Caco-2 (cell line): ENCODE measurements at regions of chr3 and their contacts with region 1.

Region 1: GRCh38 chr3:86774082-86774691 is 216.8 kb downstream of the VGLL3 start:
- DNase-seq: peak in 1 of 2 experiments; percentile 7
- H3K4me3 ChIP-seq: no peak overlapping the region
- H3K4me3 Mint-ChIP-seq: no peak overlapping the region
- H3K27ac Mint-ChIP-seq: no peak overlapping the region
- H3K4me1 ChIP-seq: no peaks in the 10 kb centered on the region
- H3K4me1 Mint-ChIP-seq: peaks cover 4% of the 10 kb centered on the region
- H3K27me3 ChIP-seq: no peaks in the 10 kb centered on the region; the same call in 1 of the 2 replicates
- H3K27me3 Mint-ChIP-seq: no peaks in the 10 kb centered on the region
- CTCF ChIP-seq: peak; percentile 35 to 56

Region 2: DNA sequence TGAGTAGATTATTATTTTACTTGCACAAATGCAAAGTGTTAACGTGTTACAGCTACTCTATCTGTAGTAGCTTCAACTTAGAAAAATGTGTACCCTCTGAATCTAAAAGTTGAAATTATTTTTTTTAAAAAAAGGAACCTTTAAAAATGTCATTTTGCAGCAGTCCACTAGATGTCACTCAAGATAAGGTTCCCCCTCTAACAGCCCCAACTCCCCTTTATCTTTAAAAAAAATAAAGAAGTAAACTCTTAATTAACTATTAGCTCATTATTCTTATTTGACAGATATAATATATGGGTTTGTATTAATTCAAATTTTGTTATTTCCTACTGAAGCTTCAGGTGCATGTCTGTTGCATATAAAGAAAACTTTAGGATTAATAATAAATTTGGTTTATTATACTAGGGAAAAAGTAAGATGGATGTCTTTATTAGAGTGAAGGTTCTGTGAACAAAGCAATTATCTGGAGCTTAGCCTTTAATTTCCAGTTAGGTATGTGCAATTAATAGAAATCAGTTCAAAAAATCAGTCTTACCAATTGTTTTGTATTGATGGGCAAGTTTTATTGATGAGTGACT is 71.7 kb before region 1 on chr3:
- CTCF ChIA-PET with region 1: no interaction called
- POLR2A ChIA-PET with region 1: no interaction called
- intact Hi-C with region 1: loop called (anchors 5 kb)
- DNase-seq: no peak
- H3K4me3 ChIP-seq: no peak overlapping the region
- H3K4me3 Mint-ChIP-seq: no peak overlapping the region
- H3K27ac Mint-ChIP-seq: no peak overlapping the region
- H3K4me1 ChIP-seq: peaks cover 3% of the 10 kb centered on the region
- H3K4me1 Mint-ChIP-seq: peaks cover 13% of the 10 kb centered on the region
- H3K27me3 ChIP-seq: no peaks in the 10 kb centered on the region
- H3K27me3 Mint-ChIP-seq: no peaks in the 10 kb centered on the region
- CTCF ChIP-seq: peak; percentile 50 to 53

Region 3: GRCh38 chr3:87006844-87007439 is 232.8 kb after region 1 on chr3:
- CTCF ChIA-PET with region 1: no interaction called
- POLR2A ChIA-PET with region 1: no interaction called
- intact Hi-C with region 1: loop called (anchors 10 kb)
- DNase-seq: no peak
- H3K4me3 ChIP-seq: no peak overlapping the region
- H3K4me3 Mint-ChIP-seq: no peak overlapping the region
- H3K27ac Mint-ChIP-seq: no peak overlapping the region
- H3K4me1 ChIP-seq: no peaks in the 10 kb centered on the region
- H3K4me1 Mint-ChIP-seq: no peaks in the 10 kb centered on the region
- H3K27me3 ChIP-seq: no peaks in the 10 kb centered on the region
- H3K27me3 Mint-ChIP-seq: peaks cover 6% of the 10 kb centered on the region
- CTCF ChIP-seq: peak; percentile 18 to 47

Region 4: DNA sequence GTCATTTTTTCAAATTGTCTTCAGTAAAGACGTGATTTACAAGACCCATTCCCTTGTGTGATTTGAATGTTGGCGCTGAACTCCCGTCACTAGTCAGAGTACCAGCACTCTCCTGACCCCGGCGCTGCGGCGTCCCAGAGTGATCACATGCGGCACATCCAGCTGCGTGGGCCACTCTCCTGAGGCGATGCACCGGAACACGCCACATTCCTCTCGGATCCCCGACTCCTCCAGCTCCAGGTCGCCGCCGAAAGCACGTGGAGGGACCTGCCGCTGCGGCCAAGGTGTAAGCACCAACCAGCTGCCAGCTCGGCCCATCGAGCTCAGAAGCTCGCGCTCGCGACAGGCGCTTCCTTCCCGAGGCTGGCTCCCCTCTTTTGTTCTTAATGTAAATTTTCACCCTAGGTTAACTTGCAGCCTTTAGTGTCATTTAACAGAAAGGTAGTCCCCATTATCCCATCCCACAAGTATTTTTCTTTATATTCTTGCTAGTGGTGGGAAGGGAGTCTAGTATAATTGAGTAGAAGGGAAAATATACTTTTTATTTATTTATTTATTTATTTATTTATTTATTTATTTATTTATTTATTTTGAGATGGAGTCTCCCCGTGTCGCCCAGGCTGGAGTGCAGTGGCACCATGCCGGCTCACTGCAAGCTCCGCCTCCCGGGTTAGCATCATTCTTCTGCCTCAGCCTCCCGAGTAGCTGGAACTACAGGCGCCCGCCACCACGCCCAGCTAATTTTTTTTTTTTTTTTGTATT is 278.5 kb after region 1 on chr3:
- CTCF ChIA-PET with region 1: no interaction called
- POLR2A ChIA-PET with region 1: no interaction called
- intact Hi-C with region 1: no loop called
- DNase-seq: no peak
- H3K4me3 ChIP-seq: no peak overlapping the region
- H3K4me3 Mint-ChIP-seq: no peak overlapping the region
- H3K27ac Mint-ChIP-seq: no peak overlapping the region
- H3K4me1 ChIP-seq: no peaks in the 10 kb centered on the region
- H3K4me1 Mint-ChIP-seq: no peaks in the 10 kb centered on the region
- H3K27me3 ChIP-seq: no peaks in the 10 kb centered on the region
- H3K27me3 Mint-ChIP-seq: peaks cover 6% of the 10 kb centered on the region
- CTCF ChIP-seq: no peak

Region 5: GRCh38 chr3:87145553-87145952 is 371.4 kb after region 1 on chr3:
- CTCF ChIA-PET with region 1: no interaction called
- POLR2A ChIA-PET with region 1: no interaction called
- intact Hi-C with region 1: loop called (anchors 5 kb)
- DNase-seq: peak in 1 of 2 experiments; percentile 25
- H3K4me3 ChIP-seq: no peak overlapping the region
- H3K4me3 Mint-ChIP-seq: no peak overlapping the region
- H3K27ac Mint-ChIP-seq: no peak overlapping the region
- H3K4me1 ChIP-seq: no peaks in the 10 kb centered on the region
- H3K4me1 Mint-ChIP-seq: no peaks in the 10 kb centered on the region
- H3K27me3 ChIP-seq: no peaks in the 10 kb centered on the region
- H3K27me3 Mint-ChIP-seq: no peaks in the 10 kb centered on the region
- CTCF ChIP-seq: peak in 1 of 2 experiments; percentile 0

Region 6: DNA sequence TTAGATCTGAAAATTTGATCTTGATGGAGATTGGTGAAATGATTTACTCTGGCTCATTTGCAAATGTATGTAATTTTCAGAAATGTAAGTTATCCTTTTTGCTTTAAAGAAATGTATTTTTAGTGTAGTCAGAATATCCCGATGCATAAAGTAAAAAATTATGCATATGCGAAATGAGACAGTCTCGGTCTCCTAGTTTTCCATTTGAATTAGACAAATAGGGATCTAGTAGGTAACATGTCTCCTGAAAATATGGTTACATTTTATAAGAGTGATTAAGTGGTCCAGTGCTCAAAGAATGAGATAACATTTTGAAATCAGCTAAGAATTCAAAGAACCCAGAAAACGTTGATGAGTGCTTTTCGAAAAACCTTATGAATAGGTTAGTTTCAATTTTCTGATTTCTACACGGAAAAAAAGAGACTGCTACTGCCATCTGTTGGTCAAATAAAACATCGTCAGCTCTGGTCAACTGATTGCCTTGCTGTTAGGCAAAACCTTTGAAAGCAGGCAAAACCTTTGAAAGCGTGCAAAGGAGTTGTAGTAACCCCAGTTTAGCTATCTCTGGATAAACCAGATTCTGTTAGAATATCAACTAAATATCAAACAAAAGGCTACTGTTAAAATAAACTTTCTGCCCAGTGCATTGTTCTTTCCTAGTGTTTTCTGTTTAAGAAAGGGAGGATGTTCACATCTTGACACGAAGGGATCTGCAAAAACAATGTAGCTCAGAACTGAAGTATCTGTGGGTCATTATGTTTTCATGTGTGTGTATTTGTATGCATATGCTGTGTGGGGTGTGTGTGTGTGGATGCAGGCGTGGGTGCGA is 393.7 kb after region 1 on chr3:
- CTCF ChIA-PET with region 1: no interaction called
- POLR2A ChIA-PET with region 1: no interaction called
- intact Hi-C with region 1: loop called (anchors 1 kb)
- DNase-seq: peak in 1 of 2 experiments; percentile 53
- H3K4me3 ChIP-seq: no peak overlapping the region
- H3K4me3 Mint-ChIP-seq: no peak overlapping the region
- H3K27ac Mint-ChIP-seq: no peak overlapping the region
- H3K4me1 ChIP-seq: peaks cover 8% of the 10 kb centered on the region; the same call in 1 of the 2 replicates
- H3K4me1 Mint-ChIP-seq: no peaks in the 10 kb centered on the region
- H3K27me3 ChIP-seq: no peaks in the 10 kb centered on the region
- H3K27me3 Mint-ChIP-seq: peaks cover 6% of the 10 kb centered on the region
- CTCF ChIP-seq: peak; percentile 41 to 48